ENCODE measurements at regions of chr6 and their contacts with region 1.

Region 1: DNA sequence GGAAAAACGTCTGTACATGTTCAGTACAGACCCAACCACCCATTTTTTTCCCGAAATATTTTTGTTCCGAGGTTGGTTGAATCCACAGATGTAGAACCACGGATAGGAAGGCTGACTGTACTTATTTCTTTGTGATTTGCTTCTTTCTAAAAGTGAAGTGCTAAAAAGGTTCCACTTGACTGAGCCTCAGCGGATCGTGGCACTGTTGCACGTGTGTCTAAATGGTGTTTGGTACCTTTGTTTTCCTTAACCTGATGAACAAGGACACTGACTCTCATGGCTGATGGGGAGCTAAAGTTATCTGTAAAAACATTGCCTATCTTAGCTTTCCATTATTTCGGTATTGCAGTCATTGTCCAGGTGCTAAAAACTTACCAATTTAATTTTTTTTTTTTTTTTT is 6.2 kb downstream of the BPHL start:
- DNase-seq: no peak
- ATAC-seq: no peak
- H3K4me3 ChIP-seq: no peak overlapping the region
- H3K27ac ChIP-seq: no peak overlapping the region
- H3K4me1 ChIP-seq: peaks cover 8 to 9% of the 10 kb centered on the region in 2 experiments; a peak in 4 of 5 replicates
- H3K27me3 ChIP-seq: no peaks in the 10 kb centered on the region
- CTCF ChIP-seq: no peak
- EP300 ChIP-seq: no peak
- POLR2A ChIP-seq: no peak
- RAD21 ChIP-seq: no peak

Region 2: GRCh38 chr6:2744209-2744771 is 380.4 kb before region 1 on chr6:
- CTCF ChIA-PET with region 1: no interaction called
- POLR2A ChIA-PET with region 1: no interaction called
- in situ Hi-C with region 1: no loop called
- intact Hi-C with region 1: no loop called
- DNase-seq: no peak
- ATAC-seq: peak; percentile 26; the same call in 2 of the 3 replicates
- H3K4me3 ChIP-seq: no peak overlapping the region
- H3K27ac ChIP-seq: no peak overlapping the region
- H3K4me1 ChIP-seq: peaks cover 5 to 6% of the 10 kb centered on the region in 2 experiments; a peak in 3 of 5 replicates
- H3K27me3 ChIP-seq: no peaks in the 10 kb centered on the region
- CTCF ChIP-seq: peak; percentile 26 to 47 (median 40); a peak in 3 of 6 replicates
- EP300 ChIP-seq: no peak
- POLR2A ChIP-seq: no peak
- RAD21 ChIP-seq: peak in 1 of 2 experiments; percentile 52; a peak in 2 of 4 replicates

Region 3: DNA sequence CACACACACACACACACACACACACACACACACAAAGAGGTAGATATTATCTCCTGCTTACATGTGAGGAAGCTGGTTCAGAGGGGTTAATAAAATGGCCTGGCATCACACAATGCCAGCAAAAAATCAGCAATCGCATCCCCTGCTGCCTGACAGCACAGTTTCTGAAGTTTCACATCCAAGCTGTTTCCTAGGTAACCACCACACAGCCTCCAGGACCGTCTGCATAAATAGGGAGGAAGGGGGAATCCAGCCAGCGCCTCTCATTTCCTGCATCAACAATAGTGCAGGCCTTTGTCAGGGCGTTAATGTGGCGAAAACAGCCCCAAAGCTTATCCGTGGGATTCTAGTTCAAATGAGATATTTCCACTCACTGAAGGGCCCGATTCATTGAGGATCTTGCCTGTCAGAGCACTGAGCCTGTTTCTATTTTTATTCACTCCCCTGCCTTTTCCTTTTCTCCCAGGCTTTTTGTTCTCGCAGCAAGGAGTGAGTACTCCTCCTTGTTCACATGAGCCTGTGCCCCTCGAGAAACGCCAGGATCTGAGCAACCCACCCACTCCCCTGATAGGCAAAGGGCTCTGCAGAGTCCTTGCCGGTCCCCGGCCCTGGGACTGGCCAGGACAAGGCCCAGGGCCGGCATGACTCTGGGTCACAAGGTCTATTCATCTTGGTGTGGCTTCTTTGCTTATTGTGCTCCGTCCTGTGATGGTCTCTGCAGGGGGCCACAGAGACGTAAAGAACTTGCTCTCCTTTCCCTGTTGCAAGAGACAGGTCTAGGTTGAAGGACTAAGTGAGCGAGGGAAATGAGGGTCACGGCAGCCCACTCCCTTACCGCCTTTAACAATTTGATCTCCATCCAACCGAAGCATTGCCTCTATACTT is 70.1 kb after region 1 on chr6:
- CTCF ChIA-PET with region 1: no interaction called
- POLR2A ChIA-PET with region 1: interaction called, 3 read pairs
- in situ Hi-C with region 1: no loop called
- intact Hi-C with region 1: loop called (anchors 1 kb)
- DNase-seq: peak in 1 of 4 experiments; percentile 29
- ATAC-seq: peak; percentile 69
- H3K4me3 ChIP-seq: peak overlapping the region; percentile 27
- H3K27ac ChIP-seq: peak overlapping the region; percentile 65
- H3K4me1 ChIP-seq: peaks cover 14 to 16% of the 10 kb centered on the region in 2 experiments; a peak in 4 of 5 replicates
- H3K27me3 ChIP-seq: no peaks in the 10 kb centered on the region
- CTCF ChIP-seq: no peak
- EP300 ChIP-seq: no peak
- POLR2A ChIP-seq: no peak
- RAD21 ChIP-seq: no peak

Region 4: GRCh38 chr6:3258720-3259490 is 134.2 kb after region 1 on chr6 and contains the start of gene PSMG4:
- CTCF ChIA-PET with region 1: interaction called, 5 read pairs
- POLR2A ChIA-PET with region 1: interaction called, 5 read pairs
- in situ Hi-C with region 1: no loop called
- intact Hi-C with region 1: loop called (anchors 2 kb)
- DNase-seq: peak; percentile 95 to 100 (median 100)
- ATAC-seq: peak; percentile 96
- H3K4me3 ChIP-seq: peak within 1 kb of the TSS; percentile 94
- H3K27ac ChIP-seq: peak within 1 kb of the TSS; percentile 87
- H3K4me1 ChIP-seq: peaks cover 35 to 36% of the 10 kb centered on the region in 2 experiments
- H3K27me3 ChIP-seq: no peaks in the 10 kb centered on the region
- CTCF ChIP-seq: no peak; a peak in 1 of 6 replicates
- EP300 ChIP-seq: 0 out of 2 replicates have a peak, but pooled peaks have one; percentile 29
- POLR2A ChIP-seq: peak; percentile 86
- RAD21 ChIP-seq: peak in 1 of 2 experiments; percentile 13; a peak in 2 of 4 replicates
- polyA plus RNA-seq, gene PSMG4: 12.9 to 19.4 TPM